A549 (cell line): ENCODE measurements at regions of chr10 and their contacts with region 1.

Region 1: GRCh38 chr10:69383558-69383957 is 33.2 kb downstream of the TACR2 start:
- DNase-seq: peak in 1 of 2 experiments; percentile 35
- ATAC-seq: peak; percentile 85; a peak in 5 of 6 replicates
- H3K4me3 ChIP-seq: no peak overlapping the region
- H3K27ac ChIP-seq: peak overlapping the region in 1 of 2 experiments; percentile 57; a peak in 3 of 6 replicates
- H3K4me1 ChIP-seq: peaks cover 29% of the 10 kb centered on the region
- CTCF ChIP-seq: peak; percentile 20; the same call in 1 of the 3 replicates
- EP300 ChIP-seq: no peak
- POLR2A ChIP-seq: no peak
- RAD21 ChIP-seq: peak; percentile 40 to 41

Region 2: GRCh38 chr10:68526626-68527307 is 856.8 kb before region 1 on chr10:
- CTCF ChIA-PET with region 1: no interaction called
- POLR2A ChIA-PET with region 1: no interaction called
- DNase-seq: no peak
- ATAC-seq: peak; percentile 83 to 91
- H3K4me3 ChIP-seq: peak overlapping the region; percentile 85
- H3K27ac ChIP-seq: peak overlapping the region; percentile 81 to 92
- H3K4me1 ChIP-seq: peaks cover 8% of the 10 kb centered on the region
- CTCF ChIP-seq: no peak
- EP300 ChIP-seq: no peak
- POLR2A ChIP-seq: no peak
- RAD21 ChIP-seq: no peak

Region 3: DNA sequence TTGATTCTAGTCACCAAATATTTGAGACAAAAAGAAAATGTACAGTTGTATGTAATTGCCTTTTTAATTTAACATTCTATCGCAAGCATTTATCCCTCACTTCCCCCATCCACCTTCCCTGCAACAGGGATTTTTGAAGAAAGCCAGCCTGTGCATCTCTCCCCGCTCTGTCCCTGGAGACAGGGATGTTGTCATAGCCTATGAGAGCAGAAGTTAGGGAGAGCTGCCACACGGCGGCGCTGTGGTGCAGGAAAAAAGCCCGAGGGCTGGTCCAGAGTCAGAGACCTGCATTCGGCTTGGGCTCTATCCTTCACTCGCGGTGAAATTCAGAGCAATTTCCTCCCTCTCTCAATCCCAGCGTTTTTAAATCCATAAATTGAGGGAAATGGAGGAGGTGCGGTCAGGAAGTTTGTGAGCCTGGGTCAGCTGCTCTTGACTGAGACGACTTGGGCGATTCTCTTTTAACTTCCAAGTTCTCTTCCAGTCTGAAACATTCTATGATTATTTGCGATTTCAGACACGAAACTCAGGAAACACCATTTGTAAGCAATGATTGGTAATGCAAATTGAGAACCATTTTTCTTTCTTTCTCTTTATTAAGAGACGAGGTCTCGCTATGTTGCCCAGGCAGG is 145.9 kb before region 1 on chr10:
- CTCF ChIA-PET with region 1: interaction called, 424 read pairs
- POLR2A ChIA-PET with region 1: no interaction called
- DNase-seq: peak; percentile 66 to 81
- ATAC-seq: peak; percentile 95 to 99
- H3K4me3 ChIP-seq: no peak overlapping the region
- H3K27ac ChIP-seq: no peak overlapping the region; a peak in 1 of 6 replicates
- H3K4me1 ChIP-seq: peaks cover 6% of the 10 kb centered on the region
- CTCF ChIP-seq: peak; percentile 96
- EP300 ChIP-seq: no peak
- POLR2A ChIP-seq: no peak
- RAD21 ChIP-seq: peak; percentile 96 to 97

Region 4: GRCh38 chr10:69315100-69315542 is 68.4 kb before region 1 on chr10:
- CTCF ChIA-PET with region 1: interaction called, 10 read pairs
- POLR2A ChIA-PET with region 1: interaction called, 3 read pairs
- DNase-seq: no peak
- ATAC-seq: no peak
- H3K4me3 ChIP-seq: no peak overlapping the region
- H3K27ac ChIP-seq: no peak overlapping the region
- H3K4me1 ChIP-seq: peaks cover 20% of the 10 kb centered on the region; the same call in 2 of the 3 replicates
- CTCF ChIP-seq: no peak
- EP300 ChIP-seq: no peak
- POLR2A ChIP-seq: no peak
- RAD21 ChIP-seq: no peak

Region 5: DNA sequence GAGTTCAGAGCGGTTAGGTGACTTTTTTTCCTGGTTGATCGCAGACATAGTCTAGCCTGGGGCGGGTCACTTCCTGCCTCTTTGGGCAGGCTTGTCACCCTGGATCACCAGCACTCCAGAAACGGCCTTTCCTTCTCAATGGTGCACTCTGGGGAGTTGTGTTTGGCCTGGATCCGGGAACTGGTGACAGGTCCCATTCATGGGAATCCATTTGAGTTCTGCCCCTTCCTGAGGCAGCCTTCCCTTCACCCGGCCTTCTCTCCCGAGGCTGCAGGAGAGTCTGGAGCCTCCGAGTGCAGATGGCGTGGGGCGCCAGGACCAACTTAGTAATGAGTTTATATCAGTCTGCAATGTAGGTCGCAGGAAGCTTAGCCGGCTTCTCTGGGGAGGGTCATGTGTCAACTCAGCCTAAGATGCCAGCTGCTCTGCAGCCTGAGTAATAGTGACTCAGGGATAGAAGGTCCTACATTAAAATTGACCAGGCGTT is 21.0 kb before region 1 on chr10:
- CTCF ChIA-PET with region 1: interaction called, 13 read pairs
- POLR2A ChIA-PET with region 1: no interaction called
- DNase-seq: peak in 1 of 2 experiments; percentile 28
- ATAC-seq: no peak
- H3K4me3 ChIP-seq: no peak overlapping the region
- H3K27ac ChIP-seq: peak overlapping the region; percentile 77 to 84
- H3K4me1 ChIP-seq: peaks cover 51% of the 10 kb centered on the region
- CTCF ChIP-seq: no peak
- EP300 ChIP-seq: no peak
- POLR2A ChIP-seq: no peak
- RAD21 ChIP-seq: no peak